ENCODE measurements at regions of chr5 and their contacts with region 1.

Region 1: DNA sequence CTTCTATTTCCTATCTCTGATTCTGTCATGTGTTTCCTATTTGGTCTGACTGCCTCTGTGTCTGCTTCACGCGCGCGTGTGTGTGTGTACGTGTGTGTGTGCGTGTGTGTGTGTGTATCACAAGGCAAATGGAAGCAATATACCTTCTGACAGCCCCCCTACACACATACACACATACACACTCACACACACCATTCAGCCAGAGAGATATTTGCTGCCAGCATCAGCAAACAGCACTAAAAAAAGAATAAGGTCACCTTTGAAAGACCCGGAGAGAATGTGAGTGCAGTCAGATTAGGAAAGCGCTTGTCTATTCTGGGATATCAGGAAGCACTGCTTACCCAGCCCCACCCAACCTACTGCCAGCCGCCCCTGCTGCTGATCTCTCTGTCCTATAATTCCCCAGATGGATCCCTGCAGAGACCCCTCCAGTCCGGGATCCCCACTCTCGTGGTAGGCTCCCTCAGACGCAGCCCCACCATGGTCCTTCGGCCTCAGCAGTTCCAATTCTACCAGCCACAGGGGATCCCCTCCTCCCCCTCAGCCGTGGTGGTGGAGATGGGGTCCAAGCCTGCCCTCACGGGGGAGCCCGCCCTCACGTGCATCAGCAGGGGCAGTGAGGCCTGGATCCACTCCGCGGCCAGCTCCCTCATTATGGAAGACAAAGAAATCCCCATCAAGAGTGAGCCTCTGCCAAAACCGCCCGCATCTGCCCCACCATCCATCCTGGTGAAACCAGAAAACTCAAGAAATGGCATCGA is 45.7 kb downstream of the PLAC8L1 start:
- DNase-seq: no peak

Region 2: DNA sequence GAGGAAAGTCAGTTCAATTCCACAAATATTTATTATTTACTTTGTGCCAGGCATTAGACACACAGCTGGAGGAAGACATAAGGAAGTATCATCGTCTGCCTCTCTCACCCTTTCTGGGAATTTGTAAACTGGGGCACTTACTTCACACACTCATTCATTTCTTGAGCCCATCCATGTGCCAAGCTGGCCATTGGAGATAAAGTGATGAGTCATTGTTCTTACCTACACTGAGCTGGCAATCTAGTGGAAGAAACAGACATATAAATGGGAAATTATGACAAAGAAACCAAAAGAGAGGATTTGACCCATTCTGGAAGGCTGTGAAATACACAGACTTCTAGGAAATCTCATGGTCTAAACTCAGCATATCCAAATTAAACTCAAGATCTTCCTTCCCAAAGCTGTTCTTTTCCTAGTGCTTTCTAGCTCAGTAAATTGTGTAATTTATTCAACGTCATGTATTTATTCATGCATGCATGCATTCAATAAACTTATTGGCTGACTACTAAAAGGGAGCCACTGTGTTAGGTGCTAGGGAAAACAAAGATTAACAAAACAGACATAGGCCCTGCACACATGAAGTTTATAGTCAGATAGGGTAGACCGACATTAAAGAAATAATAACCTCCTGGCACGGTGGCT is 58.0 kb before region 1 on chr5:
- in situ Hi-C with region 1: no loop called
- DNase-seq: no peak

Region 3: DNA sequence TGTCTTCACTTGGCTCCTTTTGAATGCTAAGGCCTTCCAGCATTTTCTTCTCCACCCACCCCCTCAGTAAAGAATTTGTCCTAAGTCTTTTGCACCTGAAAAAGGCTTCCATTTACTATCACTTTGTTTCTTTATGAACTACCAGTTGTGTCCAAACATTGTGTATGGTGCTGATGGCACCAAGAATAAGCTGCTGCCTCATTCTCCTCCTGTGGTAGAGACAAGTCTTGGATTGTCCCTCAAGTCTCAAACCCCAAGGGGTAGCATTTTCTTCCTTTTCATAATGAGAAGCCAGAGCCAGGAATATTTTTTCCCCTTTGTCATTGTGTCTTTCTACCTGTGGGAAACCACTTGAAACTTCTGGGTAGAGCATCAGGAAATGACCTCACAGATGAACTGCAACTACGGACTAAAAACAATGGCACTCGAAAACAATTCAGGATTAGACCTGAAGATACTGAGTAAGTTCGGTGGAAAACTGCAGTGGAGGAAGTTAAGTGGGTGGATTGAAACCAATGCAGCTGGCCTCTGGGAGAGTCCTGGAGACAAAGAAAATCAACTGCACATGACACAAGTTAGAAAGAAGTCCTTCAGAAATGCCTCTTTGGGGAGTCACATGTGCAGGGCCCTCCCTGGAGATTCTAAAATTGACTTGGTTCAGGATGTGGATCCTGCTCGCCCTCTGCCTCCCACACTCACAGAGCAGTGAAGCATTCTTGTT is 42.7 kb before region 1 on chr5:
- in situ Hi-C with region 1: no loop called
- DNase-seq: no peak

Region 4: GRCh38 chr5:146111409-146111808 is 51.8 kb after region 1 on chr5:
- in situ Hi-C with region 1: loop called (anchors 5 kb)
- DNase-seq: peak; percentile 9

Measured in G401 (cell line).